Aorta (tissue), 5 donors: ENCODE measurements at regions of chr11 and their contacts with region 1.

Region 1: DNA sequence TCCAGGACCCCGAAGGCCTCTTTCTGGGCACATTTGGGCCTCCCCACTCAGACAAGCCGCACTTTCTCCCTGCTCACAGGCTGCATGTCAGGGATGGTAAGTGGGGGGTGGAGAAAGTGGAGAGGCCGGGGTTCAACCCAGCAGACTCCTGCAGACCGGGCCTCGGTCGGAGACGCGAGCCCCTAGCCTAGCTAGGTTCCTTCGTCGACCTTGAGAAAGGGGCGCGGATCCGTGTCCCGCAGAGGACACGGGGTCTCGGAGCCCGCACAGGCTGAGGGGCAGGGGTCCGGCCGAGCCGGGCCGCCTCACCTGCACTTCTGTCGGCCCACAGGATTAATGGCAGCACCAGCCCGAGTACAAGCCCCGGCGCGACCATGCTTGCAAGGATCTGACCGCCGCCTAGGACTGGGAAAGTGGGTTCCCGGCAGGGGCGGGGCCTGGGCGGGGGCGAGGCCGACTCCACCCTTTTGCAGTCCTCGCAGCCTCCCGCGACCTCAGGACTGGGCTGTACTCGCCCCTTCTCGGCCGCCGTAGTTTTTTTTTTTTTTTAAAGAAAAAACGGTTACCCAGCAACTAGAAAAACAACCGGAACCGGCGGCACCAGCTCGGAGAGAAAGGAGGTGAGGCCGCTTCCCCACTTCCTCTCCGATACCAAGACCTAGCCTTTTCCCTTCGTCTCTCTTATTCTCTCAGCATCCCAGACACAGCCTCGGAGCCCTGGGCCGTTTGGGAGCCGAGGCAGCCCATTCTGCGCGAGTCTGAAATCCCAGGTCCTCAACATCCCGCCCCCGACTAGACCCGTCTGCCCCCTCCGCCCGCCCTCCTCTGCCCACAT is at the starts of genes SIAE and SPA17:
- DNase-seq: peak; percentile 97 to 99
- ATAC-seq: peak; percentile 99
- H3K4me3 ChIP-seq: peak within 1 kb of the TSS; percentile 66 to 79
- H3K27ac ChIP-seq: peak within 1 kb of the TSS; percentile 31 to 84
- H3K4me1 ChIP-seq: no peaks in the 10 kb centered on the region
- H3K27me3 ChIP-seq: no peaks in the 10 kb centered on the region
- total RNA-seq, gene SIAE: 11.5 to 24.8 TPM
- total RNA-seq, gene SPA17: 2.7 to 3.9 TPM

Region 2: GRCh38 chr11:124460459-124460858 is 213.1 kb before region 1 on chr11:
- intact Hi-C with region 1: no loop called
- DNase-seq: no peak
- ATAC-seq: no peak
- H3K4me3 ChIP-seq: no peak overlapping the region
- H3K27ac ChIP-seq: no peak overlapping the region
- H3K4me1 ChIP-seq: no peaks in the 10 kb centered on the region
- H3K27me3 ChIP-seq: peaks cover 0 to 1% of the 10 kb centered on the region in 2 donors

Region 3: GRCh38 chr11:124612045-124612444 is 61.5 kb before region 1 on chr11:
- intact Hi-C with region 1: no loop called
- DNase-seq: no peak
- ATAC-seq: no peak
- H3K4me3 ChIP-seq: no peak overlapping the region
- H3K27ac ChIP-seq: no peak overlapping the region
- H3K4me1 ChIP-seq: no peaks in the 10 kb centered on the region
- H3K27me3 ChIP-seq: no peaks in the 10 kb centered on the region

Region 4: GRCh38 chr11:124717786-124718651 is 44.5 kb after region 1 on chr11:
- intact Hi-C with region 1: loop called in 1 of 2 experiments (anchors 2 kb)
- DNase-seq: peak; percentile 64 to 79
- ATAC-seq: peak; percentile 60
- H3K4me3 ChIP-seq: peak overlapping the region in 1 of 2 donors; percentile 15
- H3K27ac ChIP-seq: peak overlapping the region in 1 of 2 donors; percentile 1
- H3K4me1 ChIP-seq: no peaks in the 10 kb centered on the region
- H3K27me3 ChIP-seq: no peaks in the 10 kb centered on the region

Region 5: GRCh38 chr11:124739479-124740276 is 66.1 kb after region 1 on chr11 and contains the start of gene NRGN:
- intact Hi-C with region 1: loop called (anchors 5 kb)
- DNase-seq: peak; percentile 96 to 98
- ATAC-seq: peak; percentile 97
- H3K4me3 ChIP-seq: peak within 1 kb of the TSS; percentile 62 to 77
- H3K27ac ChIP-seq: peak within 1 kb of the TSS in 1 of 2 donors; percentile 2
- H3K4me1 ChIP-seq: no peaks in the 10 kb centered on the region
- H3K27me3 ChIP-seq: no peaks in the 10 kb centered on the region
- total RNA-seq, gene NRGN: 33.2 to 41.1 TPM

Region 6: GRCh38 chr11:124763156-124763947 is 89.8 kb after region 1 on chr11:
- intact Hi-C with region 1: loop called (anchors 1 to 2 kb)
- DNase-seq: peak; percentile 89 to 97
- ATAC-seq: peak; percentile 38
- H3K4me3 ChIP-seq: peak overlapping the region; percentile 57 to 68
- H3K27ac ChIP-seq: peak overlapping the region in 1 of 2 donors; percentile 66
- H3K4me1 ChIP-seq: no peaks in the 10 kb centered on the region
- H3K27me3 ChIP-seq: no peaks in the 10 kb centered on the region

Region 7: DNA sequence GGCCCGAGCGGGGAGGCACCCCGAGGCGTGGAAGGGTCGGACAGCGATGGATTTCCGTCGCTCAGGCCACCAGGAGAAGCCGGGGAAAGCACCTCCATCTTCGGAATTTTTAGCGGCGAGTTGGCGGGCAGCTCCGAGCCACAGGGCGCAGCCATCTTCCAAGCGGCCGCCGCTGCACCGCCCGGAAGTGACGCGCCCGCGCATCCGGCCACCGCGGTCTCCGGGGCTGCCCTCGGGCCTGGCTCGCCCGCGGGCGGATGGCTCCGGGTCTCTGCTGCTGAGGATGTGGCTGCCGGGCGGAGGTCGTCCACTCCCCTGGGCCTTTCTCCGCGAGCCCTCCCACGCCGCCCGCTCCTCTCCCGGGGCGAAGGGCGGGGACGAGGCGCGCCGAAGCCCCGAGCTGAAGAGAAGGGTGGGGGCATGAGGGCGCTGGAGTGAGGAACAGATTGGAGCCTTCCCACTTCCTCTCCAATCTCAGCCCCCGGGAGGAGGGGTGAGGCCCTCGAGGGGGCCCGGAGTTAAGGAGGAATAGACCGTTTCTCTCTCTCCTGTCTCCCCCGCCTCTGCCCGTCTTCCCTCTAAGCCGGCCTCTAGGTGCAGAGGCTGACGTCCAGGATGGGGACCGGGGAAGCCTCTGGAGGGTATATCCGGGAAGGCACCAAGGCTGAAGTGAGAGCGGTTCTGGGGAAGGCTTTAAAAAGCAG is 126.8 kb after region 1 on chr11 and contains the start of gene MSANTD2:
- intact Hi-C with region 1: loop called in 1 of 2 experiments (anchors 10 kb)
- DNase-seq: peak; percentile 90 to 94
- ATAC-seq: peak; percentile 97
- H3K4me3 ChIP-seq: peak within 1 kb of the TSS; percentile 95 to 97
- H3K27ac ChIP-seq: peak within 1 kb of the TSS; percentile 77 to 99
- H3K4me1 ChIP-seq: peaks cover 1 to 6% of the 10 kb centered on the region in 2 donors
- H3K27me3 ChIP-seq: no peaks in the 10 kb centered on the region
- total RNA-seq, gene MSANTD2: 21.5 to 23.6 TPM

Region 8: DNA sequence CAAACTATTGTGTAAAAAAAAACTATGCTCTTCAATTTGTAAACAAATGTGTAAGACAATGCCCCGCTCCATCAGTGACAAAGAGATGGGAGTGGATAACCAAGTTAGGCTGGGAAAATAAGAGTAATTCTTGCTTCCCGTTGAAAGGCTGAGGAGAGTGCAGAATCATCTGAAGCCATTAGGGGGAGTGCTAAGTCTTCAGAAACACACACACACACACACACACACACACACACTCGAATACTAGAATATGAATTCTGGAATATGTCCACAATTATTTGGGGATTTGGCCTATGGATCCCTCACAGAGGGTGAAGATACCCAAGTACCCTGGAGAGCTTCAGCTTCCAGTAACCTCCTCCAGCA is 163.9 kb after region 1 on chr11:
- intact Hi-C with region 1: loop called (anchors 2 to 5 kb)
- DNase-seq: no peak
- ATAC-seq: peak; percentile 82
- H3K4me3 ChIP-seq: no peak overlapping the region
- H3K27ac ChIP-seq: no peak overlapping the region
- H3K4me1 ChIP-seq: no peaks in the 10 kb centered on the region
- H3K27me3 ChIP-seq: peaks cover 0 to 3% of the 10 kb centered on the region in 2 donors